Sigmoid colon (tissue), 7 donors: ENCODE measurements at regions of chr11 and their contacts with region 1.

Region 1: GRCh38 chr11:8759634-8760033 is 77.0 kb downstream of the RPL27A start:
- DNase-seq: peak; percentile 90
- H3K4me3 ChIP-seq: no peak overlapping the region
- H3K27ac ChIP-seq: peak overlapping the region; percentile 70 to 97 (median 88)
- H3K4me1 ChIP-seq: peaks cover 3 to 93% (median 86%) of the 10 kb centered on the region in 4 donors
- H3K27me3 ChIP-seq: no peaks in the 10 kb centered on the region
- CTCF ChIP-seq: no peak
- EP300 ChIP-seq: no peak
- POLR2A ChIP-seq: no peak

Region 2: GRCh38 chr11:8099291-8099899 is 660.2 kb before region 1 on chr11:
- intact Hi-C with region 1: no loop called
- DNase-seq: peak; percentile 85
- H3K4me3 ChIP-seq: no peak overlapping the region
- H3K27ac ChIP-seq: no peak overlapping the region
- H3K4me1 ChIP-seq: no peaks in the 10 kb centered on the region
- H3K27me3 ChIP-seq: no peaks in the 10 kb centered on the region
- CTCF ChIP-seq: peak; percentile 30 to 79 (median 68)
- EP300 ChIP-seq: no peak
- POLR2A ChIP-seq: no peak

Region 3: GRCh38 chr11:8728563-8728962 is 31.1 kb before region 1 on chr11:
- intact Hi-C with region 1: loop called (anchors 5 kb)
- DNase-seq: no peak
- H3K4me3 ChIP-seq: no peak overlapping the region
- H3K27ac ChIP-seq: peak overlapping the region; percentile 90 to 98 (median 96)
- H3K4me1 ChIP-seq: peaks cover 0 to 88% (median 84%) of the 10 kb centered on the region in 4 donors
- H3K27me3 ChIP-seq: no peaks in the 10 kb centered on the region
- CTCF ChIP-seq: no peak
- EP300 ChIP-seq: peak in 1 of 4 donors; percentile 12
- POLR2A ChIP-seq: no peak

Region 4: GRCh38 chr11:8807544-8808225 is 48.1 kb after region 1 on chr11:
- intact Hi-C with region 1: loop called (anchors 5 kb)
- DNase-seq: peak; percentile 82
- H3K4me3 ChIP-seq: peak overlapping the region; percentile 58 to 83 (median 70)
- H3K27ac ChIP-seq: peak overlapping the region; percentile 91 to 97 (median 96)
- H3K4me1 ChIP-seq: peaks cover 0 to 81% (median 73%) of the 10 kb centered on the region in 4 donors
- H3K27me3 ChIP-seq: no peaks in the 10 kb centered on the region
- CTCF ChIP-seq: no peak
- EP300 ChIP-seq: no peak
- POLR2A ChIP-seq: no peak

Region 5: GRCh38 chr11:9015677-9016076 is 256.0 kb after region 1 on chr11:
- intact Hi-C with region 1: no loop called
- DNase-seq: peak; percentile 86
- H3K4me3 ChIP-seq: no peak overlapping the region
- H3K27ac ChIP-seq: no peak overlapping the region
- H3K4me1 ChIP-seq: peaks cover 0 to 17% (median 7%) of the 10 kb centered on the region in 4 donors
- H3K27me3 ChIP-seq: no peaks in the 10 kb centered on the region
- CTCF ChIP-seq: peak; percentile 43 to 76 (median 72)
- EP300 ChIP-seq: no peak
- POLR2A ChIP-seq: no peak